ENCODE measurements at regions of chr5 and their contacts with region 1.

Region 1: GRCh38 chr5:172188033-172188892 is at the start of gene STK10:
- DNase-seq: peak; percentile 42
- H3K4me3 ChIP-seq: peak within 1 kb of the TSS; percentile 93
- CTCF ChIP-seq: peak; percentile 98

Region 2: DNA sequence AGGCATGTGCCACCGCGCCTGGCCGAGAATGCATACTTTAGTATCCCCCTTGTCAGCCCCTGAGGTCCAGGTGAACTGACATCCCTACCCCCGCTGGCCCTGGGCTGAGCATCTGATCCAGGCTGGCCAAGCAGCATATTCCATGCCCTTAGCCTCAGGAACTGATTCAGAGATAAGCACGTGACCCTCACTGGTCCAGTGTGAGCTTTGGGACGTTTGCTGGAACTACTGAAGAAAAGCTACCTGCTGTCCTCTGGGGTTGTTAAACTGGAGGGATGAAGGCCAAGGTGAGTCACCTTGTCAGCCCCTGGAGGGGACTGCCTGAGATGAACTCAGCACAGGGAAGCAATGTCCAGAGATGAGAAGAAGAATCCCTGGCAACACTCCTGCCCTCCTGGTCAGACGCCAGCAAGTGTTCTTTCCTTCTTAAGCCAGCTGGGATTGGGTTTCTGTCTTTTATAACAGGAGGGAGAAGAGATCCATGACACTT is 122.7 kb before region 1 on chr5:
- CTCF ChIA-PET with region 1: interaction called, 29 read pairs
- POLR2A ChIA-PET with region 1: interaction called, 3 read pairs
- DNase-seq: no peak
- H3K4me3 ChIP-seq: no peak overlapping the region
- CTCF ChIP-seq: no peak

Region 3: DNA sequence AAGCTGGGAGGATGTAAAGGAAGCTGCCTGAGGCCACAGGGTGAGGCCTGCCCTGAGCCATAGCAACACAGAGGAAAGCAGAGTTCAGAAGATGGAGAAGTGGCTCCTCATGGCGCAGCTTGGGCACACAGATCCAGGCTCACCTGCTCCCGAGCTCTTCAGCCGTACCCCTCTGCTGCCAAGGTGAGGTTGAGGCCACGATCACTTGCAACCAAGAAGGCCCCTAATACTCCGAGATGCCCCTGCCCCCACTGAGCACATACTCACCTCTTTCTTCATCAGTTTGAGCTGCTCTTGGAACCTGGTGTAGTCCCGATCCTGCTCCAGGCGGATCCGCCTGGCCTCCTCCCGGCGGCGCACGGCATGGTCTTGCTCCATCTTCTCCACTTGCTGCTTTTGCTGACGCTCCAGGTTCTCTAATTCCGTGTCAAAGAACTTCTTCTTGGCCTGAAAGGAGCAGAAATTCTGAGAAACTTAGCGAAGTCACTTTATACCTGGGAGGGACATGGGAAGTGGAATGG is 106.1 kb before region 1 on chr5:
- CTCF ChIA-PET with region 1: interaction called, 14 read pairs
- POLR2A ChIA-PET with region 1: no interaction called
- DNase-seq: no peak
- H3K4me3 ChIP-seq: no peak overlapping the region
- CTCF ChIP-seq: no peak

Region 4: DNA sequence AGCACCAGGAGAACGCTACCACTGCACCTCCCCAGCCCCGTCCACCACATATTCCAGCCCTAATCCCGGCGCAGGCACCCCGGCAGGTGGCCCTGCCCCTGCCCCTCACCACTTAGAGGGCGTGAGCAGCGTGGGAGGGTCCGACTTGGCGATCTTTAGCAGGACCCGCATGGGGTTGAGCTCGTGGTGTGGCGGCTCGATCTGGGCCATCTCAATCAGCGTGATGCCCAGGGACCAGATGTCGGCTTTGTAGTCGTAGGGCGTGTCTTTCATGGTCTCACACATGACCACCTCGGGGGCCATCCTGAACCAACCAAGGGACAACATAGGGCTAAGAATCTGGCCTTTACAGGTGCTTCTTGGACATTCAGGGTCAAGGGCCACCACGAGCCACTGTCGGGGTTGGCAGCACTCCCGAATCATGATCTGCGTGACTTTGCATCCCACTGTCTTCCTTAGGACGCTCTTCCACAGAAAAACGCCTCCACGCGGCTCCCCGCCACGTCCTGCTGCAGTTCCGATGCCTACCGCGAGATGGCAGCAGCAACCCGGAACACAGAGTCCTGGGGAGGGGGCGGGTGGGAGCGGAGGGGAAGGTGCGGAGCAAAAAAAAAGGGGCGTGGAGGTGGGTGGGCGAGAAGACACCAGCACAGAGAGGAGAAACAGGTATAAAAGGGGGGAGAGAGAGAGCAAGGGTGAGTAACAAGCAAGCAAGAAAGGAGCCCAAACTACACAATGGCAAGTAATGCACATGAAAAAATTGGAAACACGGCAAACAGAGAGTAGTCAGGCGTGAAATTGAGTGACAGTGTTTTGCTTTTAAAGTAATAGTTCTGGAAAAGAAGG is 81.5 kb before region 1 on chr5:
- CTCF ChIA-PET with region 1: interaction called, 114 read pairs
- POLR2A ChIA-PET with region 1: interaction called, 6 read pairs
- DNase-seq: no peak
- H3K4me3 ChIP-seq: 0 out of 2 replicates have a peak overlapping the region, but pooled peaks have one; percentile 2
- CTCF ChIP-seq: peak; percentile 89

Region 5: DNA sequence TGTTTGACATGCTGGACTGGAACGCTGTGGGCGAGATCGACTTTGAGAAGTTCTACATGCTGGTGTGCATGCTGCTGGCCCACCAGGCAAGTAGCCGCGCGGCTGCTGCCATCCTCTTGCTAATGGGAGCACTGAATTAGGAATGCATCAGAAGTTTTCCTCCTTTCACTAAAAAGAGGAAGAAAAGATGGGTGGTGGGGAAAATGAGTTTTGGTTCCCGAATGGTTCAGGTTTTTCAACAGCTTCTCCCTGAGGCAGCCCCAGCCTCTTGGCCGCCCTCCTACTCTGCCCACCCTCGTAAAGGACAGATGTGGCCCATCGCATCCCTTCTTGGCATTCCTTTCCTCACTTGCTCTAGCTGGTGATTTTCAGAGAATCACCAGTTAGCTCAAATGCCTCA is 11.2 kb after region 1 on chr5:
- CTCF ChIA-PET with region 1: interaction called, 45 read pairs
- POLR2A ChIA-PET with region 1: interaction called, 3 read pairs
- DNase-seq: no peak
- H3K4me3 ChIP-seq: no peak overlapping the region
- CTCF ChIP-seq: no peak

Region 6: GRCh38 chr5:172283020-172283861 is 95.0 kb after region 1 on chr5 and contains the start of gene UBTD2:
- CTCF ChIA-PET with region 1: interaction called, 11 read pairs
- POLR2A ChIA-PET with region 1: interaction called, 4 read pairs
- DNase-seq: no peak
- H3K4me3 ChIP-seq: peak within 1 kb of the TSS; percentile 75
- CTCF ChIP-seq: peak; percentile 55

Measured in AG04449 (cell line).